ENCODE measurements at regions of chr4 and their contacts with region 1.

Region 1: DNA sequence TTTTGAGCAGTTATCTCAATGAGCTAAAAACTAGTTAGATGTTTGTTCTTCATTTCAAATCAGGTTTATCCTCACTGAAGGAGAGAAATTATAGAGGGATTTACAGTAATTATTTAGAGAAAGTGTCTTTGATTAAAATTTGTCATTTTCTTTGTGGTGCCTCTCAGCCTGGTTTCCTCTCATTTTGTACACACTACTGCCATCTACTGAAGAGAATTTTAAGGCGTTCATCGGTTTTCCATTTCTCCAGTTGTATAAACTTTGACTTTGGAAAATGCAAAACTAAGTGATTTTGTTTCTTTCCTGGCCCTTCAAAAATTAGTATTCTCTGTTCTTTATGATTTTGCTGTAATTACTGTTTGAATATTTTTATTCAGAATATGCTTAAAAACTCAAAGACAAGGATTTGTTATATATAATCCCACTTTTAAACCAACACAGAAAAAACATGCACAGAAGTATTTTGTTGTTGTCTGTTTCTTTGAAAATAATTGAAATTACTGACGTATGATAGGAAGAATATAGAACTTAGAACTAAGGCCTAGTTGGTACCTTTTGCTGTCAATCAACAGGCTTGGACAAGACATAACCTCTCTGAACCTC is 34.4 kb upstream of the ANXA3 start:
- DNase-seq: no peak
- H3K4me3 Mint-ChIP-seq: no peak overlapping the region
- H3K27ac Mint-ChIP-seq: no peak overlapping the region
- H3K4me1 Mint-ChIP-seq: no peaks in the 10 kb centered on the region
- H3K27me3 Mint-ChIP-seq: peaks cover 18% of the 10 kb centered on the region

Region 2: DNA sequence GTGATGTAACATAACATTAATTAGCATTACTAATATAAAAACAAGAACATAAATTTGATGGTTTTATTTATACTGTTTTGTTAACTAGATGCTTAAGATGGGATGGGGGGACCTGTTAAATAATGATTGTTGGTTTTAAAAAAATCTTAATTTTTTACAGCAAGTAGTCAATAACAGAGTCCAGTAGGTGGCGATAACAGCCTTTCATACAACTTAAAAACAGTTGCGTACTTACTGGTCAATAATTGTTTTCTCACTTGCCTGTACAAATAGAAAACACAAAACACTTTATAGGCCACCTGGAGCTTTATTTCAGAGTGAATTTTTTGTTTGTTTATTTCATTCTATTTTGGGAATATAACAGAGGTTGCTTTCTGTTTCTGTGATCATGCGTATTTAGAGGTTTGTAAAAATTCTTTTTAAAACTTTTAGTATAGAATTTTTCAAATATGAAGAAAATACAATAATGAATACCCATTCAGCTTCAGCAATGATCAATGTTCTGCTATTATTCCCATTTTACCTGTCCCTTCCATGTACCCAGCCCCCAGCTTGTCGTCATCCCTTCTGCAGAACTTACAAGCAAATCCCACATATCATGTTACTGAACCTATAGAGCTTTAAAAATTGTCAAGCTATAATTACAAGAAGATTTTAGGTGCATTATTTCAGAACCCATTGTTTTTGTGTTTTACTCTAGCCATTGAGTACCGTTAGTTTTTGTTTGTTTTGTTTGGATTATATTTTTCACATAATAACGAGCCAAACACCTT is 557.4 kb before region 1 on chr4:
- intact Hi-C with region 1: loop called (anchors 1 kb)
- DNase-seq: no peak
- H3K4me3 Mint-ChIP-seq: no peak overlapping the region
- H3K27ac Mint-ChIP-seq: no peak overlapping the region
- H3K4me1 Mint-ChIP-seq: no peaks in the 10 kb centered on the region
- H3K27me3 Mint-ChIP-seq: peaks cover under 1% of the 10 kb centered on the region